GM23248 (cell line): ENCODE measurements at regions of chr7 and their contacts with region 1.

Region 1: DNA sequence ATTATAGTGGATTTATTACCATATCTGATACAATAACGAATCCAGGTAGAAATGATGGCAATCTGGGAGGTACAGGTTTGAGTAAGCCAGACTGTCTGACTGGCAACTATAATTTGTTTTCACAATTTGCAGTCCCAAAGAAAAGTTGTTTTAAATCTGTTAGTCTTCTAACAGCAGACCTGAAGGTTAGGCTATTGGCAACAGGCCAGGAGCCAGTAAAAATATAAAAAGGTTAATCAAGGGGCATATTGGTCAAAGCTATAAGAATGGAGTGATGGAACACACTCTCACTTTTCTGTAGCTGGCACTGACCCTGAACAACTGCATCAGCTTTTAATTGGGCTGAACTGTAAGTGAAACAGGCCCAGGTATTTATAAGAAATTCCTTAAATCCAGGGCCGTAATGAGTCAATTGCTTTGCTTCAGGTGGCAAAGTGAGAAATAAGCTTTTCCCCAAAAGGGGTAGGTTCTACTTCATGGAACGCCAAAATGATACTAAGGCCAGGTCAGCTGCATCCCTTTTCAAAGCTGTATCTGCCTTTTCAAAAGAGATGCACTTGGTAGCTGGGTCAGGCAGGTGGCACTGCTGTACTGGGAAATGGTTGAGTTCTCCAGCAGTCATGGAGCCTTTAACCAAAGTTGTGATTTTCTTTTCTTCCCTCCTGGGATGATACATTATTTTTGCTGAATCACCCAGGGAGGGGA is 7.0 kb upstream of the GPR22 start:
- DNase-seq: peak; percentile 82
- H3K4me3 ChIP-seq: no peak overlapping the region
- H3K27ac ChIP-seq: no peak overlapping the region
- H3K4me1 ChIP-seq: no peaks in the 10 kb centered on the region
- H3K27me3 ChIP-seq: no peaks in the 10 kb centered on the region

Region 2: GRCh38 chr7:107743567-107744344 is 280.9 kb after region 1 on chr7 and contains the start of gene CBLL1:
- in situ Hi-C with region 1: loop called (anchors 25 kb)
- DNase-seq: peak; percentile 99
- H3K4me3 ChIP-seq: peak within 1 kb of the TSS; percentile 92
- H3K27ac ChIP-seq: peak within 1 kb of the TSS; percentile 93
- H3K4me1 ChIP-seq: peaks cover 37% of the 10 kb centered on the region
- H3K27me3 ChIP-seq: no peaks in the 10 kb centered on the region
- total RNA-seq, gene CBLL1: 11.9 and 47.2 TPM in 2 replicates

Region 3: GRCh38 chr7:107874605-107875446 is 411.9 kb after region 1 on chr7:
- in situ Hi-C with region 1: loop called (anchors 25 kb)
- DNase-seq: peak; percentile 81
- H3K4me3 ChIP-seq: no peak overlapping the region
- H3K27ac ChIP-seq: no peak overlapping the region
- H3K4me1 ChIP-seq: no peaks in the 10 kb centered on the region
- H3K27me3 ChIP-seq: peaks cover 5% of the 10 kb centered on the region; the same call in 1 of the 2 replicates